Ascending aorta (tissue), 2 donors: ENCODE measurements at regions of chr2 and their contacts with region 1.

Region 1: DNA sequence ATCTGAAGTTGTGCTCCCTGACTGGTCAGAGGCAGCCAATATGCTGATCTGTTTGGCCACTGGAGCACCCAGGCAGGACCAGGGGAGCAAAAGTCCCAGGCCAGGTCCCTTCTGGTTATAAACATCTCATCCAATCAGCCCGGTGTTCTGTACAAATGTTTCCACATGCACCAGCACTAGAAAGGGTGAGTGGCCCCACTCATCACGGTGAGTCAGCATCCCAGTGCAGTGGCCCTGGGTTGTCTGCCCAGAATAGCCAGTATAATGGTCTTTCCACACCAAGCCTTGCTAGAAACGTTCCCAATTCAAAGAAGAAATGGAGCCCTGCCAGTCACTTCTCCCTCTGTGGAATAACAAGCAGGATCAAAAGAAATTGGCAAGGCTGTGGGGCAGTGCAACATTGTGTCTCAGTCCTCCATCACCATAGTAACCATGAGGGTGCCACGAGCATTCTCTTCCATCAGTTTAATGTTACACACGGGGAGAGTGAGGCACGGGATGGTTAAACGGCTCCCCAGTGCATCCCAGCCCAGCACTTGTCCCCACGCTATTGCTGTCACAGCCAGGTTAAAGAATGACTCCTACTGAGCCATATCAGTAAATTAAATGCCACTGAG is 174.9 kb downstream of the SEPTIN10 start:
- DNase-seq: peak; percentile 75 to 93
- H3K4me3 ChIP-seq: no peak overlapping the region
- H3K27ac ChIP-seq: peak overlapping the region; percentile 89 to 96
- H3K4me1 ChIP-seq: peaks cover 36 to 49% of the 10 kb centered on the region in 2 donors
- H3K27me3 ChIP-seq: no peaks in the 10 kb centered on the region
- CTCF ChIP-seq: peak in 1 of 3 experiments; percentile 25

Region 2: DNA sequence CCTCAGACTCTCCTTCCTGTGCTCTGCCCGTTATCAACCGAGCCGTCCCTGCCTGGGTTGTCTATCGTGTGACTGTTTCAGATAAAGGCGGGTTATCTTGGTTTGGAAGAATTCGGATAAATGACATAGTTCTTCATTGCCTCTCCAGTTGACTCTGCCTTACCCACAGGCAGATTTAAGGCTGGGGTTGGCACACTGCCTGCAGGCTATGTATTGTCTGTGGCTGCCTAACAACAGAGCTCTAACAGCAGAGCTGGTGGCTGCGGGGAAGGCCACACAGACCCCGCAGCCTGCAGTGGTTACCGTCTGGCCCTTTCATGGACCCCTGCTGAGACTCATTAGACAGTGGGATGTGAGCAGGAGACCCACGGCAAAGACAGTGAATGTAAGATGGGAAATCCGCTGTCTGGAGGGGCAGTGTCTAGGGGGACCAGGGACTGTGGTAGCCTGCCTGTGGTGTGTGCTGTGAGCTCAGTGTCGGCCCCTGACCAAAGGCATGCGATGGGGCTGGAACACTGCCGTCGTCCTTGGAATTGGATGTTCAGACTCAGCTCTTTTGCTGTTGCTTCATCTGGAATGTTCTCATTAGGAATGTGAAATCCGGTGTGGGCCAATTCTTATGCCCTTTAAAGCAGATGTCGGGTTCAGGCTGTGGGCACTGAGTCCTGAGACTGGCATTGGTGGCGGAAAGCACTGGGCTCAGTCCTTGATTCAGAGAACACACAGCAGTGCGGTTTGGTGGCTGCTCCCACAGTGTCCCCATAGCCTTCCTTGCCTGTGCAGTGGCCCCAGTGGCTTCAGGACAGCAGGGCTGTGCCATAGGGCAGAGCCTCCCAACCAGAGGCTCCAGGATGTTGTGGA is 265.3 kb before region 1 on chr2:
- intact Hi-C with region 1: loop called (anchors 1 kb)
- DNase-seq: peak; percentile 75 to 97
- H3K4me3 ChIP-seq: peak overlapping the region; percentile 6 to 31
- H3K27ac ChIP-seq: peak overlapping the region; percentile 95 to 98
- H3K4me1 ChIP-seq: peaks cover 27 to 70% of the 10 kb centered on the region in 2 donors
- H3K27me3 ChIP-seq: no peaks in the 10 kb centered on the region
- CTCF ChIP-seq: no peak

Region 3: DNA sequence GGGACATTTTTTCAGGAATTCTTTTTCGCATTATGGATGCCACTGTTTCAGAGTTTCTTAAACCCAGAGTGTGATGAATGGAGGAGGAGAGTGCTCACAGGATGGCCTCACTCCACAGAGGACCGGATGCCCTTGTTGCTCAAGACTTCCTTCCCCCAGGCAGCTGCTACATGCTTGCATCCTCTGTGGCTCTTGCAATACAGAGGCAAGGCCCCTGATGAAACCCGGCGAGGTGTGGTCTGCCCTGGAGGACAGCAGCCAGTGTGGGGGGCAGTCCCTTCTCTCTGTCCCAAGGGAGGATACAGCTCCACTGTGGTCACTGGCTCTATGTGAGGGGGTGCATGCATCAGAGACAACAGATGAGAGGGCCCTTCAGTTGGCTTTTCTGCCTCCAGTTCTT is 200.3 kb before region 1 on chr2:
- intact Hi-C with region 1: loop called (anchors 2 kb)
- DNase-seq: peak; percentile 55 to 87
- H3K4me3 ChIP-seq: no peak overlapping the region
- H3K27ac ChIP-seq: peak overlapping the region; percentile 86 to 95
- H3K4me1 ChIP-seq: peaks cover 25 to 78% of the 10 kb centered on the region in 2 donors
- H3K27me3 ChIP-seq: no peaks in the 10 kb centered on the region
- CTCF ChIP-seq: no peak

Region 4: GRCh38 chr2:109322111-109322510 is 116.8 kb before region 1 on chr2:
- intact Hi-C with region 1: loop called (anchors 5 kb)
- DNase-seq: peak; percentile 80 to 98
- H3K4me3 ChIP-seq: peak overlapping the region in 1 of 2 donors; percentile 17
- H3K27ac ChIP-seq: peak overlapping the region; percentile 86 to 88
- H3K4me1 ChIP-seq: peaks cover 30 to 67% of the 10 kb centered on the region in 2 donors
- H3K27me3 ChIP-seq: no peaks in the 10 kb centered on the region
- CTCF ChIP-seq: no peak

Region 5: DNA sequence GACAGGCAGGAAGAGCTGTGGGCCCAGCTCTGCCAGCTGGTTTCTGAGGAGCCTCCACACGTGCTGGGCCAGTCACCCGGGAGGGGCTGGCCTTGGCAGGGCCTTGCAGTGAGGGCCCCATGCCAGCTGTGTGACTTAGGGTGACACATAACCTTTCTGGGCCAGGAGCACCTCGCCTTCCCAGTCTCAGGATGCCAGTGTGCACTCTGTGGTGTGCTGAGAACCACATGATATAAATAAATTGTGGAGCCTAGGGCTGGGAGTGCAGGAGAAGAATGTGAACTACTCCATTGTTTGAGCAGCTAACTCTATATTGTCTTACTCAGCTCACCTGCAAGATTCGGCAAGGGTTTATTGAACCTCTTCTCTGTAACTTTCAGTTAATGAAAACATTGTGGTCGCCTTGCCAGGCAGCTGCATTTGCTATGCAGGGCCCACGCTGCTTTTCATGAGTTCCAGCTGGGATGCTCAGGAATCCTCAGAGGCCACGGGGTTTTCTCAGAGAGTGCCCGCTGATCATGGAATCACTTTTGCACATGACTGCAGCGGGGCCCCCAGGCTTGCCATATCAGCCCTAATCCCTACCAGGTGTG is 87.6 kb before region 1 on chr2:
- intact Hi-C with region 1: loop called (anchors 5 kb)
- DNase-seq: peak; percentile 58 to 90
- H3K4me3 ChIP-seq: no peak overlapping the region
- H3K27ac ChIP-seq: peak overlapping the region; percentile 66 to 76
- H3K4me1 ChIP-seq: peaks cover 13 to 40% of the 10 kb centered on the region in 2 donors
- H3K27me3 ChIP-seq: no peaks in the 10 kb centered on the region
- CTCF ChIP-seq: no peak

Region 6: GRCh38 chr2:109486711-109487535 is 48.0 kb after region 1 on chr2:
- intact Hi-C with region 1: loop called (anchors 2 kb)
- DNase-seq: no peak
- H3K4me3 ChIP-seq: no peak overlapping the region
- H3K27ac ChIP-seq: peak overlapping the region; percentile 75 to 89
- H3K4me1 ChIP-seq: peaks cover 16 to 47% of the 10 kb centered on the region in 2 donors
- H3K27me3 ChIP-seq: no peaks in the 10 kb centered on the region
- CTCF ChIP-seq: no peak

Region 7: GRCh38 chr2:109510136-109511028 is 71.5 kb after region 1 on chr2:
- intact Hi-C with region 1: loop called (anchors 5 kb)
- DNase-seq: peak; percentile 37 to 92
- H3K4me3 ChIP-seq: no peak overlapping the region
- H3K27ac ChIP-seq: no peak overlapping the region
- H3K4me1 ChIP-seq: peaks cover 7 to 15% of the 10 kb centered on the region in 2 donors
- H3K27me3 ChIP-seq: no peaks in the 10 kb centered on the region
- CTCF ChIP-seq: peak; percentile 89 to 94 (median 93)